ENCODE measurements at regions of chr13 and their contacts with region 1.

Region 1: DNA sequence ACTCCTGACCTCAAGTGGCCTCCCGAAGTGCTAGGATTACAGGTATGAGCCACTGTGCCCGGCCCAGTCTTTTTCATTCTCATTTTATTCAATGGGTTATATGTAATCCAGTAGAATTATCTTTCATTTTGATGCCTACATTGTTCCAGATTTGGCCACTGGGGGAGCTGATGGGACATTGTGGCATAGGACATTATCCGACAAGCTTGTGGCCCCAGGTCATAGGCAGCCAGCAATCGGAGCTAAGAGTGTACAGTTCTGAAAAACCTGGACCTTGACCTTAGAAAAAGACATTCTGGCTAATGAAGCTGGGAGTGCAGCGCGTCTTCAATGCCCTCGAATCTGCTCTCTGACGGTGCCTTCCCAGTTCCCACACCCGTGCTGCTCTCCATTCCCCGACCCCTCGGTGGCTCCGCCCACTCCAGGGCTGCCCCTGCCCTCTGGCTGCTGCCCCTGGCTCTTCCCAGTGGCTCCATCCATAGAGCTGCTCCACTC is 108.7 kb downstream of the TEX29 start:
- DNase-seq: peak; percentile 54
- H3K4me3 ChIP-seq: no peak overlapping the region
- H3K27ac ChIP-seq: no peak overlapping the region
- H3K4me1 ChIP-seq: no peaks in the 10 kb centered on the region; a peak in 1 of 4 replicates
- H3K27me3 ChIP-seq: peaks cover 38% of the 10 kb centered on the region
- CTCF ChIP-seq: peak; percentile 60
- EP300 ChIP-seq: no peak
- RAD21 ChIP-seq: peak; percentile 23; the same call in 1 of the 2 replicates

Region 2: DNA sequence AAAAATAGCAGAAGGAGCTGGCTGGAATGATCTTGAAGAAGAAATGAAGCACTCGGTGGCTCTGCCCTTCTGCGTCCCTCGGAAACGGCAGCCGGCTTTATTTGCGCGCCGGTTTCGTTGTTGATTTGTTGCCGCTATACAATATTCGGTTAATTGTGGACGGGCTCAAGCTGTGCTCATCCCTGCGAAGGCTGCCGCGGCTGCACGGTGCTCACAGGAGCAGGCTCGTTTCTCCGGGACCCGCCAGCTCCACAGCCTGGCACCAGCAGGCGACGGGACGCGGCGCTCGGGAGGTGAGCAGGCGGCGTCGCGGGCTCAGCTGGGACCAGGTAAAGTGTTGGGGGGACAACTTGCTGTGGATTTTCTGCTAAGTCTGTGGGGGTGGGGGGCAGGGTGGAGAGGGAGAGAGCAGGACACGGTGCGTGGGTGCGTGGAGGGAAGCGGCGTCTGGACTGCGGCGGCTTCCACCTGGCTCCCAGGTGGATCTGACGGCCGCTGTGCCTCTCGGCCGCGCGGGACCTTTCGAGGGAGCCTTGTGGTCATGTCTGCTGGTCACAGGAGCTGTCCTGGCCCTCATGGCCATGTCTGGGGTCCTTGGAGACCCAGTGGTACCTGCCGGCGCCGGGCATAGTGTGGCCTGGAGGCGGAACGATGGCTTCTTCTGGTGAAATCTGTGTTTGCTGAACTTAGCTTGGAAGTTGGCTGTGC is 17.8 kb before region 1 on chr13:
- CTCF ChIA-PET with region 1: interaction called, 14 read pairs
- POLR2A ChIA-PET with region 1: no interaction called
- DNase-seq: no peak
- H3K4me3 ChIP-seq: no peak overlapping the region
- H3K27ac ChIP-seq: no peak overlapping the region
- H3K4me1 ChIP-seq: no peaks in the 10 kb centered on the region
- H3K27me3 ChIP-seq: peaks cover 77% of the 10 kb centered on the region
- CTCF ChIP-seq: no peak
- EP300 ChIP-seq: no peak
- RAD21 ChIP-seq: no peak

Measured in SK-N-SH (cell line).